CD8-positive, alpha-beta T cell (primary cell): ENCODE measurements at regions of chr16 and their contacts with region 1.

Region 1: GRCh38 chr16:2520092-2520783 is at the start of gene AMDHD2:
- DNase-seq: peak; percentile 82 to 96 (median 89)
- ATAC-seq: peak; percentile 63
- H3K4me3 ChIP-seq: peak within 1 kb of the TSS; percentile 32 to 68
- H3K4me3 Mint-ChIP-seq: peak within 1 kb of the TSS; percentile 94
- H3K27ac ChIP-seq: peak within 1 kb of the TSS; percentile 58 to 76
- H3K27ac Mint-ChIP-seq: peak within 1 kb of the TSS; percentile 98
- H3K4me1 ChIP-seq: peaks cover 55% of the 10 kb centered on the region
- H3K4me1 Mint-ChIP-seq: peaks cover 60% of the 10 kb centered on the region
- H3K27me3 ChIP-seq: no peaks in the 10 kb centered on the region
- H3K27me3 Mint-ChIP-seq: no peaks in the 10 kb centered on the region
- CTCF ChIP-seq: no peak
- total RNA-seq, gene AMDHD2: 212 to 226 TPM

Region 2: DNA sequence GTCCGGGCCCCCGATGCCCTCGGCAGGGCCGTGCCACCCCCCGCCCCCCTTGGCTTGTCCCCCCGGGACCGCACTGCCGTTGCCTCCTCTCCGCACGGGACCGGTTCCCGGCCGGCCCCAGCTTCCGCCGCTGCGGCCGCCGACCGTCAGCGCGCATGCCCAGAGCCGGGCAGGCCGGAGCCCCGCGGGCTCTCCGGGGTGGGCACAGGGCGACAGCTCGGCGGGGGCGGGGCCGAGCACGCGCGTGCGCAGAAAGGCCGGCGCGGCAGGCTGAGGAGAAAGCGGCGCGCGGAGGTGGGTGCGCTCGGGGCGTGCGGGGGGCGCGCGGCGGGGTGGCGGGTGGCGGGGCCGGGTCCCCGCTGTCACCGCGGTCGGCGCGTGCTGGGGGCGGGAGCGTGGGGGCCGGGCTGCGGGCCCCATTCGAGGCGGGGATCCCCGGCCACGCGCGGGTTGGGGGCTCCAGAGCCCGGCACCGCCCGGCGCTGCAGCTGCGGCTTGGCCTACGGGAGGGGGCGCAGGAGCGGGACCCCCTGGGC is 45.3 kb before region 1 on chr16 and contains the start of gene TBC1D24:
- CTCF ChIA-PET with region 1: no interaction called
- POLR2A ChIA-PET with region 1: no interaction called
- intact Hi-C with region 1: loop called in 1 of 2 experiments (anchors 2 kb)
- DNase-seq: peak; percentile 48 to 89 (median 77)
- ATAC-seq: peak; percentile 61
- H3K4me3 ChIP-seq: peak within 1 kb of the TSS; percentile 62 to 70
- H3K4me3 Mint-ChIP-seq: peak within 1 kb of the TSS; percentile 77
- H3K27ac ChIP-seq: peak within 1 kb of the TSS in 1 of 2 experiments; percentile 36
- H3K27ac Mint-ChIP-seq: no peak within 1 kb of the TSS
- H3K4me1 ChIP-seq: peaks cover 29% of the 10 kb centered on the region
- H3K4me1 Mint-ChIP-seq: peaks cover 24% of the 10 kb centered on the region
- H3K27me3 ChIP-seq: peaks cover 11 to 20% of the 10 kb centered on the region in 2 experiments
- H3K27me3 Mint-ChIP-seq: peaks cover 15% of the 10 kb centered on the region
- CTCF ChIP-seq: no peak
- total RNA-seq, gene TBC1D24: 2.8 to 3.8 TPM

Region 3: DNA sequence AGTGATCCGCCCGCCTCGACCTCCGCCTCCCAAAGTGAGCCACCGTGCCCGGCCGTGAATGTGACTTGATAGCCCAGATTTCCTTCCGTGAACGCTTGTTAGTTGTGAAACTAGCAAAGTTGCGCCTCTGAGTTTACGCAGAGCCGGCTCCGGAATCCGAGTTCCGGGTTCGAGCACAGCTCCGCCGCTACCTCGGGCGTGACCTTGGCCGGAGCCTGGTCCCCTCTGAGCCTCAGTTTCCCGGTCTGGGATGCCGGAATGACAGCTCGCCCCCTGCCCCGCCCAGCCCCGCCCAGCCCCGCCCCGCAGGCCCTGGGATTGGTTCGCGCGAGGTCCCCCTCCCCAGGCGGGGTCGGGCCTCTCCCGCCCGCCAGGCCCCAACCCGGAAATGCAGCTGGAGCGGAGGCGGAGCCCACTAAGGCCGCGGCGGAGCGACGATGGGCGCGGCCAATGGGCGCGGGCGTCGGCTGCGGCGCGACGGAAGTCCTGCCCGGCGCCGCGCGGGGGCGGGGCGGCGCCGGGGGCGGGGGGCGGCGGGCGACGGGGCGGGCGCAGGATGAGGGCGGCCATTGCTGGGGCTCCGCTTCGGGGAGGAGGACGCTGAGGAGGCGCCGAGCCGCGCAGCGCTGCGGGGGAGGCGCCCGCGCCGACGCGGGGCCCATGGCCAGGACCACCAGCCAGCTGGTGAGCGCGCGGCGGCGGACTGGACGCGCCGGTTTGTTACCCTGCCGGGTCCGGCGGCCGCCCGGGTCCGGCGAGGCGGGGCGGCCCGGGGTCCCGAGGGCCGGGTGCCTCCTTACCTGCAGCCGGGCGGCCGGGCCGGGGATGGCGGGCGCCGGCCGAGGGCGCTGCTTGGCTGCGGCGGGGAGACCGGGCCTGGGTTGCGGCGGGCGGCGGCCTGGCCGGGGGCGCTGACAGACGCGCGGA is 17.5 kb after region 1 on chr16 and contains the start of gene PDPK1:
- CTCF ChIA-PET with region 1: interaction called, 6 read pairs
- POLR2A ChIA-PET with region 1: interaction called, 59 read pairs
- intact Hi-C with region 1: loop called (anchors 1 kb)
- DNase-seq: peak; percentile 87 to 98 (median 94)
- ATAC-seq: peak; percentile 87
- H3K4me3 ChIP-seq: peak within 1 kb of the TSS; percentile 74 to 85
- H3K4me3 Mint-ChIP-seq: peak within 1 kb of the TSS; percentile 87
- H3K27ac ChIP-seq: peak within 1 kb of the TSS; percentile 63 to 75
- H3K27ac Mint-ChIP-seq: peak within 1 kb of the TSS; percentile 91
- H3K4me1 ChIP-seq: peaks cover 31% of the 10 kb centered on the region
- H3K4me1 Mint-ChIP-seq: peaks cover 43% of the 10 kb centered on the region
- H3K27me3 ChIP-seq: no peaks in the 10 kb centered on the region
- H3K27me3 Mint-ChIP-seq: no peaks in the 10 kb centered on the region
- CTCF ChIP-seq: no peak
- total RNA-seq, gene PDPK1: 42.3 to 49.2 TPM

Region 4: DNA sequence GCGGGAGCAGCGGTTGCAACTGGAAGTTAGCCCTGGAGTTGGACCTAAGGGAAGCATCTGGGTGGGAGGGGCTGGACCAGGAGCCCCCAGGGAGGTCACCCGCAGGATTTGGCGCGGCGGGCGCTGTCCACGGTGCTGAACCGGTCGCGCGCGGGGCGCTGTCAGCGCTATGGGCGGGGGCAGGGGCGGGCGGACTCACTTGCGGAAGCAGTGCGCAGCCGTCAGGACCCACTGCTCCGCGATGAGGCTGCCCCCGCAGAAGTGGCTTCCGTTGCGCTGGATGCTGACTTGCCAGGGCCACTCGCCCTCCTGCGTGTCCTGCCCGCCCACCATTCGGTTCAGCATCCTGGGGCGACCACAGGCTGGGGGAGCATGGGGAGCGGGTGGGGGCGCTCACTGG is 195.3 kb after region 1 on chr16:
- CTCF ChIA-PET with region 1: no interaction called
- POLR2A ChIA-PET with region 1: no interaction called
- intact Hi-C with region 1: no loop called
- DNase-seq: peak; percentile 70 to 90 (median 87)
- ATAC-seq: peak; percentile 99
- H3K4me3 ChIP-seq: peak overlapping the region; percentile 8 to 33
- H3K4me3 Mint-ChIP-seq: peak overlapping the region; percentile 5
- H3K27ac ChIP-seq: no peak overlapping the region
- H3K27ac Mint-ChIP-seq: no peak overlapping the region
- H3K4me1 ChIP-seq: peaks cover 5% of the 10 kb centered on the region
- H3K4me1 Mint-ChIP-seq: peaks cover 3% of the 10 kb centered on the region
- H3K27me3 ChIP-seq: no peaks in the 10 kb centered on the region
- H3K27me3 Mint-ChIP-seq: no peaks in the 10 kb centered on the region
- CTCF ChIP-seq: no peak